GM13976 (cell line): ENCODE measurements at regions of chr9 and their contacts with region 1.

Region 1: DNA sequence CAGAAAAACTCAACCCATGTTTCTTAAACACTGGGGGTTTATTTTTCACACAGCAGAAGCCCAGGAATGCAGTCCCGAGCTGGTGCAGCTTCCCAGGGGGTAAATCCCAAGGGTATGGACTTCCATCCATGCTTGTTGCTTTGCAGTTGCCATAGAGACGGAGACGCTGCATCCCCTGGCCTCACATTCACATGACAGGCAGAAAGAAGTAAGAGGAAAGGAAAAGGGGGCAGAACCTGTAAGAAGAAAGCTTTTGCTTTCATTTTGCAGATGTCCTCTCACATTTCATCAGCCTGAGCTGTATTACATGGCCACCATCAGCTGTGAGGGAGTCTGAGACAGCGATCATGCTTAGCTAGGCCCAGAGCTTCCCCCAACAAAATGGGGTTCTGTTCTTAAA is 321.0 kb downstream of the AGTPBP1 start:
- DNase-seq: peak; percentile 26
- CTCF ChIP-seq: no peak

Region 2: DNA sequence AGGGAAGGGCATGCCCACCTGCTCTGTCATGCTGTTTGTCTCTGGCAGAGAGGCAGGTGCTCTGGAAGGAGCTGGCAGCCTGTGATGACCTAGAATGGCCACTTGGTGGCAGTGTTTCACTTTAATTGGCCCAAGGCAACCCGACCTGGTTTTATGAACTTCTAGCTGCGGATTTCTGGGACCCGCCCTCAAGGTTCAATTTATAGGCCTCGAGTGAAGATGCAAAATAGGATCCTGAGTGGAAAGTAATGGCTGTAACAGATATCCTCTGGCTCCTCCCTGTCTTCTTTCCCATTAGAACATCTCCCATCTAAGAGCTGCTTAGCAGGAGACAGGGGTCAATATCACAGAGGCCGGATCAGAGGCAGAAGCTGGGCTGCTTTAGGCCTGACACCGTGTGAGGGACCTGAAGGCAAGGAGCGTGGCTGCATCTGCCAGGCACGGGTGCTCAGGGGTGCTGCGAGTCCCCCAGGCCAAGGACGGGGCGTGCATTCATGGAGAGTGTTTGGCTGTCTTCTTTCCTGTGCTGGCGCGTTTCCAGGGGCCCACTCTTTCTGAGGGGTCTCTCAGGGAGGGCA is 1023.5 kb before region 1 on chr9:
- in situ Hi-C with region 1: loop called (anchors 25 kb)
- DNase-seq: peak; percentile 80
- CTCF ChIP-seq: peak; percentile 94